ENCODE measurements at regions of chr7 and their contacts with region 1.

Region 1: GRCh38 chr7:137001041-137001440 is 132.6 kb downstream of the CHRM2 start:
- DNase-seq: no peak
- ATAC-seq: peak; percentile 2; the same call in 1 of the 2 replicates
- H3K4me3 ChIP-seq: no peak overlapping the region
- H3K27ac ChIP-seq: no peak overlapping the region
- H3K4me1 ChIP-seq: peaks cover 46% of the 10 kb centered on the region
- H3K27me3 ChIP-seq: no peaks in the 10 kb centered on the region
- CTCF ChIP-seq: no peak

Region 2: GRCh38 chr7:137142376-137142775 is 141.3 kb after region 1 on chr7:
- CTCF ChIA-PET with region 1: no interaction called
- POLR2A ChIA-PET with region 1: interaction called, 9 read pairs
- intact Hi-C with region 1: loop called (anchors 2 kb)
- DNase-seq: peak; percentile 90
- ATAC-seq: peak; percentile 95
- H3K4me3 ChIP-seq: no peak overlapping the region
- H3K27ac ChIP-seq: peak overlapping the region; percentile 90
- H3K4me1 ChIP-seq: peaks cover 36% of the 10 kb centered on the region
- H3K27me3 ChIP-seq: no peaks in the 10 kb centered on the region
- CTCF ChIP-seq: no peak

Measured in PC-3 (cell line).